ENCODE measurements at regions of chr6 and their contacts with region 1.

Region 1: DNA sequence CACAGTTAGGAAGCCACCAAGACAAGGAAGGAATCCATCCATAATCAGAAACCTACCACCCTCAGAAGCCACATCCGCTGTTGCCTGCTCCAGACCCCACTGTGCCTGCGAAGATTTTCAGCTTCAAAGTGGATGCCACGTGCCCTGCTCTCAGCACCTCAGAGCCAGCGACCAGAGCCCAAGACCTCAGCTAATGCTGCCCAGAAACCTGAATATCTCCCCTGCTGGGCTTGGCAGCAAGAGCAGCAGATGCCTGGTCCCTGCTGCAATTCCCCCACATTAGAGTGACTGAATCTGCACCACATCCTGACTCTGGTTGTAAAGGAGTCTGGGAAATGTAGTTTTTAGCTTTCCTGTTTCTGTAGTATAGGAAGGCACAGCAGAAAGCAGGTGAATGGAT is 10.7 kb upstream of the ULBP3 start:
- DNase-seq: no peak
- H3K4me3 ChIP-seq: no peak overlapping the region
- H3K27ac ChIP-seq: no peak overlapping the region
- H3K4me1 ChIP-seq: peaks cover 0 to 17% (median 0%) of the 10 kb centered on the region in 3 donors
- H3K27me3 ChIP-seq: peaks cover 0 to 30% (median 0%) of the 10 kb centered on the region in 4 donors
- CTCF ChIP-seq: no peak
- POLR2A ChIP-seq: no peak

Region 2: DNA sequence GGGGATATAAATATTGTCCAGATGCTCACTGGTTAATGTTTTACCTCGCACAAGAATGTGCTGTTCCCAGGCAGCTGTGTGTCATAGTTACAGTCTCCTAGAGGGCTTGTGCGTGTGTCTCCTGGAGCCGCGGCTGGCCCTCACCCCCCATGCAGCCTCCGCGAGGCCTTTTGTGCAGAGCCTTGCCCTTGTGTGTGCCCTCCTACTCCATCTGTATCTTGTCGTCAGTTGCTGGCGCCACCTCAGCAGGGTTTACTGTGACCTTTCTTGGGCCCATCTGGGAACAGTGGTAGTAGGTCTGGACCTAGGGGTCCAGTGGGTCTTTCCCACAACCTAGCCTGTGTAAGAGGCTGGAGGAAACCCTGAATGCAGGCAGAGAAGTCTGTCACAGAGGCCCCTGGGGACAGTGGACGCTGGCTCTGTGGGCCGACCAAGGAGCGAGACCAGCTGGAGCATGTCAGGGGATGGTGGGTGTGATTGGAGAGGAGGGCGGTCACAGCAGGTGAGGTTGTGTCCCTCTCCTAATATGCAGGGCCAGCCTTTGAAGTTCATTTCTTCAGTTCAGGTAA is 98.4 kb after region 1 on chr6:
- intact Hi-C with region 1: no loop called
- DNase-seq: no peak
- H3K4me3 ChIP-seq: no peak overlapping the region
- H3K27ac ChIP-seq: peak overlapping the region in 2 of 4 donors; percentile 50 to 77
- H3K4me1 ChIP-seq: peaks cover 0 to 27% (median 0%) of the 10 kb centered on the region in 3 donors
- H3K27me3 ChIP-seq: no peaks in the 10 kb centered on the region
- CTCF ChIP-seq: no peak
- POLR2A ChIP-seq: no peak

Region 3: GRCh38 chr6:150334790-150335783 is 255.5 kb after region 1 on chr6:
- intact Hi-C with region 1: loop called (anchors 5 kb)
- DNase-seq: no peak
- H3K4me3 ChIP-seq: no peak overlapping the region
- H3K27ac ChIP-seq: no peak overlapping the region
- H3K4me1 ChIP-seq: peaks cover 0 to 21% (median 9%) of the 10 kb centered on the region in 3 donors
- H3K27me3 ChIP-seq: no peaks in the 10 kb centered on the region
- CTCF ChIP-seq: peak in 5 of 6 experiments; percentile 71 to 89 (median 84)
- POLR2A ChIP-seq: no peak

Region 4: DNA sequence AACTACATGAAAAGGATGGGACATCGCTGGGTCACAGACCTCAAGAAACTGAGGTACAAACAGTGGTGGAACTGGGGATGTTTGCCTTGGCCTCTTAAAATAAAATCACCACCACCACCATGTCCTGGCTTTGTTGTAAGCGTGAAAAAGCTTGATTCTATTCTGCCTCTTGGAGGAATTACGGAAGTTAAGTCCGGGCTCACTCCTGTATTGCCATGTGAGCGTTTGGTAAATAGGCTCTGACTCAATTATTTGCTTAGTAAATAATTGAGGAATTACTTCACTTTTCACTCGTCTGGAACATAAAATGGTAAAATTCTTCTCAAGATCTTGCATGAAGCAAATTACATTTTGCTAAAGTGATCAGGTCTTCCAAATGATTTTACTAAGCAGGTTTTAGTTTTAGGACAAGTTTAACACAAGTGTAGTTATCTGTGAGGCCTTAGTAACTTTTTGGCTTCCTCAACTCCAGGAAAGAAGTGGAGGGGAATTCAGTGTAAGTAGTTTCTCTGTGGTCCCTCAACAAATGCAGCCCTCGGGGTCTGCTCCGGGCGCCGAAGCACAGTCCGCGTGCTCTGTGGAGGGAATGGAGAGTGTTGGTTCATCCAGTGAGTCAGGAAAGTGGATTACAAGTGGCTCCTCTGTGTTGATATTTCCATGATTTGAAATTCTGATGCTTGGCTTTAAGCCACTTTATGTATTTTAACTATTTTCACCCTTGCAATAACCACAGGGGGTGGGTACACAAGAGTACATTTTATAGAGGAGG is 313.0 kb after region 1 on chr6:
- intact Hi-C with region 1: loop called (anchors 5 kb)
- DNase-seq: no peak
- H3K4me3 ChIP-seq: no peak overlapping the region
- H3K27ac ChIP-seq: no peak overlapping the region
- H3K4me1 ChIP-seq: no peaks in the 10 kb centered on the region
- H3K27me3 ChIP-seq: peaks cover 0 to 12% (median 0%) of the 10 kb centered on the region in 4 donors
- CTCF ChIP-seq: no peak
- POLR2A ChIP-seq: no peak

Region 5: DNA sequence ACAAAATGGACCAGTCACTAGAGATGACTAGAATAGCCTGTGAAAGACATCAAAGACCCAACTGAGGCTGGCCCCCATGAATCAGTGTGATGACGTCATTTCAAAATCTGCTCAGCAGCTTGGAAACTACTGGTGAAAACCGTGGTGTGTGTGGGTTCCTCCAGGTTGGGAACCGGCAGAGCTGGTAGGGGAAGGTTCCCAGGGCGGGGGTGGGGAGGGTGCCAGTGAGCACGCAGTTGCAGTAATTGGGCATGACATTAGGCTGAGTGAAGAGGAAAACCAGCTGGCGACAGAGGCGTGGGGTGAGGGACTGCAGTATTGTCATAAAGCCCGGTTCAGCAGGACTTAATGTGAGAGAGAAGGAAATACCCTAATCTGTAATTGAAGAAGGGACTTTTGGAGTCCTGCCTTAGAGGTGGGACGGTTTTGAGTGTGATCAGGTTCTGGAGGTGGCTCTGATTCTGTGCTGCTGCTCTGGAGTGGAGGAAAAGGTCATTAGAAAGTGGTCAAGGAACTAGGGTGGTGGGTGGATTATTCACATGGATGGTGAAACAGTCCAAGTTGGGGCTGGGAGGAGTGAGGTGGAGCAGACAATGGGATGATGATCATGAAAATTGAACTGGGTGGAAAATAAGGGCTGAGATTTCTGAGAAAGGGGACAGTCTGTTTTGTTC is 733.9 kb after region 1 on chr6:
- intact Hi-C with region 1: loop called (anchors 10 kb)
- DNase-seq: no peak
- H3K4me3 ChIP-seq: no peak overlapping the region
- H3K27ac ChIP-seq: peak overlapping the region; percentile 61 to 90 (median 74)
- H3K4me1 ChIP-seq: peaks cover 0 to 37% (median 13%) of the 10 kb centered on the region in 3 donors
- H3K27me3 ChIP-seq: no peaks in the 10 kb centered on the region
- CTCF ChIP-seq: no peak
- POLR2A ChIP-seq: no peak

Measured in esophagus squamous epithelium (tissue), 5 donors.